Cardiac septum (tissue), 1 donor: ENCODE measurements at regions of chr13 and their contacts with region 1.

Region 1: DNA sequence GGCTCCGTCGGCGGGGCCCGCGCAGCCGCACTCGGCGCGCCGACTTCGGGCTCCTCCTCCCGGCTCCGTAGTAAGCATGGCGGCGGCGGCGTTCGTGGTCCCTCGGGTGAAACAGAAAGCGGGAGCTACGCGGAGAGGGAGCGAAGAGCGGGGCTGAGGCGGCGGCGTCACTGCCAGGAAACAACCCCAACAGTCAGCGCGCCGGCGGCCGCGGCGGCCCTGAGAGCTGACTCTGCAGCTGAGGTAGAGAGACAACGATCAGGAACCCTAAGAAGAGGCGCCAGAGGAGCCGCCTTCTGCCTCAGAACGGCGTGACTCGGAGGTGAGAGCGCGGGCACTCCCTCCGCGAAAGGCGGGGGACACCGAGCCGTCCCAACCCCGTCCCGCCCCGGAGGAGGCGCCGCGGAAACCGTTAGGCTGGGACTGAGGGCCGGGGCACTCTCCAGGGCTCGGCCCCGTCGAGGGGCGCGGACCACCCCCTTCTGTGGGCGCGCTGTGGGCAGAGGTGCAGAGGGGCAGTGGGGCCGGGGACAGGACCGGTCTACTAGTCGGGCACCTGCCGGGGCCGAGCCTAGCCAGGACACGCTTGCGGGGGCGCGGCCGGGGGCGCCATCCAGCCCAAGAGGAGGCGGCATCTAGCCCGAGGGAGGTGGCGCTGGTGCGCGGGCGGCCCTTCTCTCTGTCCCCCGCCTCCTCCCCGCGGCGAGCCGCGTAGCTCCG is at the start of gene FNDC3A:
- DNase-seq: peak; percentile 92
- total RNA-seq, gene FNDC3A: 27.3 TPM

Region 2: GRCh38 chr13:48942131-48942530 is 33.9 kb before region 1 on chr13:
- intact Hi-C with region 1: no loop called
- DNase-seq: no peak

Region 3: GRCh38 chr13:49247643-49248621 is 271.9 kb after region 1 on chr13 and contains the start of gene CDADC1:
- intact Hi-C with region 1: loop called (anchors 10 kb)
- DNase-seq: peak; percentile 99
- total RNA-seq, gene CDADC1: 7.1 TPM